RWPE1 (cell line): ENCODE measurements at regions of chr11 and their contacts with region 1.

Region 1: GRCh38 chr11:114110952-114111947 is 51.7 kb downstream of the ZBTB16 start:
- DNase-seq: no peak
- H3K27ac ChIP-seq: no peak overlapping the region
- CTCF ChIP-seq: no peak

Region 2: DNA sequence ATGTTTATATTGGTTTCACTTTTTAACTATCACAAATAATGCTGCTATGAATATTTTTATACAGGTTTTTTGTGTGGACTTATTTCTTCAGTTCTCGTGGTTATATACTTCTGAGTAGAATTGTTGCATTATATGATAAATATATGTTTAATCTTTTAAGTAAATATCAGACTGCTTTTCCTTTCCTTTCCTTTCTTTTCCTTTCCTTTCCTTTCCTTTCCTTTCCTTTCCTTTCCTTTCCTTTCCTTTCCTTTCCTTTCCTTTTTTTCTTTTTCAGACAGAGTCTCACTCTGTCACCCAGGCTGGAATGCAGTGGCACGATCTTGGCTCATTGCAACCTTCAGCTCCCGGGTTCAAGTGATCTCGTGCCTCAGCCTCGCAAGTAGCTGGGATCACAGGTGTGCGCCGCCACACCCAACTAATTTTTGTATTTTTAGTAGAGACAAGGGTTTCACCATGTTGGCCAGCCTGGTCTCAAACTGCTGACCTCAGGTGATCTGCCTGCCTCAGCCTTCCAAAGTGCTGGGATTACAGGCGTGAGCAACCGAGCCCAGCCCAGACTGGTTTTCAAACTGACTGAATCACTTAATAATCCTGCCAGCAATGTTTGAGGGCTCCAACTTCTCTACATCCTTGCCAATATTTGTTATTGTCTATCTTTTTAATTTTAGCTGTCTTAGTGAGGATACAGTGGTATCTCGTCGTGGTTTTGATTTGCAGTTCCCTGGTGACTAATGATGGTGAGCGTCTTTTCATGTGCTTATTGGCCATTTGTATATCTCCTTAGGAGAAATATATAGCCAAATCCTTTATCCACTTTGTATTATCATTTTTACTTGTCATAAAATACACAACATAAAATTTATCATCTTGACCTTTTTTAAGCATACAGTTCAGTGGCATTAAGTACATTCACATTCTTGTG is 184.7 kb before region 1 on chr11:
- CTCF ChIA-PET with region 1: no interaction called
- POLR2A ChIA-PET with region 1: no interaction called
- DNase-seq: no peak
- H3K27ac ChIP-seq: no peak overlapping the region
- CTCF ChIP-seq: no peak

Region 3: GRCh38 chr11:114010931-114011330 is 100.3 kb before region 1 on chr11:
- CTCF ChIA-PET with region 1: interaction called, 10 read pairs
- POLR2A ChIA-PET with region 1: no interaction called
- DNase-seq: no peak
- H3K27ac ChIP-seq: no peak overlapping the region
- CTCF ChIP-seq: no peak